CD8-positive, alpha-beta memory T cell (primary cell): ENCODE measurements at regions of chr6 and their contacts with region 1.

Region 1: GRCh38 chr6:158819213-158819909 is at the start of gene EZR:
- DNase-seq: peak; percentile 82 to 93 (median 84)
- H3K4me3 ChIP-seq: peak within 1 kb of the TSS; percentile 39
- H3K4me3 Mint-ChIP-seq: peak within 1 kb of the TSS; percentile 79 to 100 (median 99)
- H3K27ac ChIP-seq: peak within 1 kb of the TSS; percentile 99
- H3K27ac Mint-ChIP-seq: peak within 1 kb of the TSS; percentile 88 to 99 (median 93)
- H3K4me1 ChIP-seq: peaks cover 36% of the 10 kb centered on the region
- H3K4me1 Mint-ChIP-seq: peaks cover 40 to 52% (median 46%) of the 10 kb centered on the region in 3 donors
- H3K27me3 ChIP-seq: no peaks in the 10 kb centered on the region
- H3K27me3 Mint-ChIP-seq: peaks cover 0 to 3% of the 10 kb centered on the region in 2 donors
- total RNA-seq, gene EZR: 296 to 299 TPM

Region 2: GRCh38 chr6:157412791-157413190 is 1406.6 kb before region 1 on chr6:
- CTCF ChIA-PET with region 1: no interaction called
- POLR2A ChIA-PET with region 1: no interaction called
- DNase-seq: no peak
- H3K4me3 ChIP-seq: no peak overlapping the region
- H3K4me3 Mint-ChIP-seq: no peak overlapping the region
- H3K27ac ChIP-seq: no peak overlapping the region
- H3K27ac Mint-ChIP-seq: no peak overlapping the region
- H3K4me1 ChIP-seq: no peaks in the 10 kb centered on the region
- H3K4me1 Mint-ChIP-seq: no peaks in the 10 kb centered on the region
- H3K27me3 ChIP-seq: no peaks in the 10 kb centered on the region
- H3K27me3 Mint-ChIP-seq: peaks cover 0 to 2% of the 10 kb centered on the region in 2 donors

Region 3: GRCh38 chr6:158621694-158622544 is 197.4 kb before region 1 on chr6:
- CTCF ChIA-PET with region 1: no interaction called
- POLR2A ChIA-PET with region 1: no interaction called
- DNase-seq: no peak
- H3K4me3 ChIP-seq: no peak overlapping the region
- H3K4me3 Mint-ChIP-seq: no peak overlapping the region
- H3K27ac ChIP-seq: no peak overlapping the region
- H3K27ac Mint-ChIP-seq: peak overlapping the region in 6 of 8 donors; percentile 43 to 78 (median 66)
- H3K4me1 ChIP-seq: no peaks in the 10 kb centered on the region
- H3K4me1 Mint-ChIP-seq: peaks cover 20 to 30% (median 25%) of the 10 kb centered on the region in 3 donors
- H3K27me3 ChIP-seq: no peaks in the 10 kb centered on the region
- H3K27me3 Mint-ChIP-seq: no peaks in the 10 kb centered on the region

Region 4: GRCh38 chr6:158711264-158711663 is 108.1 kb before region 1 on chr6:
- CTCF ChIA-PET with region 1: no interaction called
- POLR2A ChIA-PET with region 1: no interaction called
- DNase-seq: no peak
- H3K4me3 ChIP-seq: no peak overlapping the region
- H3K4me3 Mint-ChIP-seq: no peak overlapping the region
- H3K27ac ChIP-seq: no peak overlapping the region
- H3K27ac Mint-ChIP-seq: peak overlapping the region in 1 of 8 donors; percentile 23
- H3K4me1 ChIP-seq: peaks cover 6% of the 10 kb centered on the region
- H3K4me1 Mint-ChIP-seq: peaks cover 23 to 44% (median 28%) of the 10 kb centered on the region in 3 donors
- H3K27me3 ChIP-seq: no peaks in the 10 kb centered on the region
- H3K27me3 Mint-ChIP-seq: peaks cover 0 to 2% of the 10 kb centered on the region in 2 donors

Region 5: DNA sequence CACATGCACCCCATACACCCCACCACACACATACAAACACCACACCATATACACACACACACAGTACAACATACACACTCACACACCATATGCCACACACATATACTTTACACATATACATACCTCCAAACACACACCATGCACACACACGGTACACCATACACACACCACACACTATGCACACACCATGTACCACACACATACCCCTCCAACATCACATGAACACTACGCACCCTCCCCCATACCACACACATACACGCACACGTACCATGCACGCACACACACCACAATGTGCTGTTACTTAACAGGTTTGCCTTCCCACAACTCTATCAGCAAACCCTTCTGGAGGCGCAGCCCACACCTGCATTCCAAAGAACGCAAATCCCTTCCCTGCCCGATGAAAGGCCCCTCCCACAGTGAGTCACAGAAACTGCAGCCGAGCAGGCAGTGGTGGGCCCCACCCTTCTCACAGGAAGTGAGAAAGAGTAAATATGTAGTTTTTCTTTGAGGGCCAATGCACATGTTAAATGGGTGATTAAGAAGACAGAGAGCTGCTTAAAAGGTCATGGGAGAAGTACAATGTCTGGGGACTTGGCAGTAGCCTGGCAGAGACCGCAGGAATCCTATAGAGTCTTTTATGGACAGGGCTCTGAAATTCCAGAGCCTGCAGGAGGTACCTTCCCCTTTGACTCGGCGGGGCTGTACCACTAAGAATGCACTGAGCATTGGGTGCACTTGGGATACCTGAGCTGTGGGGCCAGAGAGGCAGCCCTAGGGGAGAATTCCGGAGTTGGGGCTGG is 33.9 kb after region 1 on chr6:
- CTCF ChIA-PET with region 1: interaction called, 3 read pairs
- POLR2A ChIA-PET with region 1: interaction called, 39 read pairs
- DNase-seq: peak; percentile 81 to 96 (median 86)
- H3K4me3 ChIP-seq: peak overlapping the region; percentile 68
- H3K4me3 Mint-ChIP-seq: no peak overlapping the region
- H3K27ac ChIP-seq: peak overlapping the region; percentile 95
- H3K27ac Mint-ChIP-seq: no peak overlapping the region
- H3K4me1 ChIP-seq: peaks cover 64% of the 10 kb centered on the region
- H3K4me1 Mint-ChIP-seq: peaks cover 9 to 39% (median 36%) of the 10 kb centered on the region in 3 donors
- H3K27me3 ChIP-seq: no peaks in the 10 kb centered on the region
- H3K27me3 Mint-ChIP-seq: peaks cover 0 to 1% of the 10 kb centered on the region in 2 donors

Region 6: GRCh38 chr6:159023893-159024292 is 204.5 kb after region 1 on chr6:
- CTCF ChIA-PET with region 1: no interaction called
- POLR2A ChIA-PET with region 1: no interaction called
- DNase-seq: no peak
- H3K4me3 ChIP-seq: no peak overlapping the region
- H3K4me3 Mint-ChIP-seq: no peak overlapping the region
- H3K27ac ChIP-seq: no peak overlapping the region
- H3K27ac Mint-ChIP-seq: peak overlapping the region; percentile 51 to 94 (median 70)
- H3K4me1 ChIP-seq: peaks cover 2% of the 10 kb centered on the region
- H3K4me1 Mint-ChIP-seq: peaks cover 13 to 19% (median 14%) of the 10 kb centered on the region in 3 donors
- H3K27me3 ChIP-seq: no peaks in the 10 kb centered on the region
- H3K27me3 Mint-ChIP-seq: no peaks in the 10 kb centered on the region